Activated B cell treated with CpG ODN at 0.5 μM for 24 hours (primary cell): ENCODE measurements at regions of chr13 and their contacts with region 1.

Region 1: DNA sequence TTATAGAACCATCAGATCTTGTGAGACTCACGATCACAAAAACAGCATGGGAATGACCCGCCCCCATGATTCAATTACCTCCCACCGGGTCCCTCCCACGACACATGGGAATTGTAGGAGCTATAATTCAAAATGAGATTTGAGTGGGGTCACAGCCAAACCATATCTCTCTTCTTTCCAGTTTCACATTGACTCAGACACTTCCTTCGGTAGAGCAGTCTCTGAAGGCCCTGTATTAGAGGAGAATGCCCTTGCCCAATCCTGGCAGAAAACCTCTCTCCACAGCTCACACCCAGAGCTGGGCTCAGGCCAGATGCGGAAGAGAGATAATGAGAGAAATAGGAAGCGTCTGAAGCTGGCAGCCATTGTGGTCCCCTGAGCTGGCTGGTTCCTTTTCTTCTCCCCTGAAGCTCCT is 72.4 kb upstream of the CLDN10 start:
- DNase-seq: no peak
- ATAC-seq: no peak
- H3K4me3 Mint-ChIP-seq: no peak overlapping the region
- H3K27ac Mint-ChIP-seq: no peak overlapping the region
- H3K4me1 Mint-ChIP-seq: peaks cover 5% of the 10 kb centered on the region
- H3K27me3 Mint-ChIP-seq: peaks cover 9% of the 10 kb centered on the region
- CTCF ChIP-seq: no peak

Region 2: GRCh38 chr13:94435604-94436226 is 1044.4 kb before region 1 on chr13:
- CTCF ChIA-PET with region 1: no interaction called
- POLR2A ChIA-PET with region 1: no interaction called
- intact Hi-C with region 1: loop called (anchors 10 kb)
- DNase-seq: no peak
- ATAC-seq: peak; percentile 70
- H3K4me3 Mint-ChIP-seq: no peak overlapping the region
- H3K27ac Mint-ChIP-seq: no peak overlapping the region
- H3K4me1 Mint-ChIP-seq: peaks cover 12% of the 10 kb centered on the region
- H3K27me3 Mint-ChIP-seq: peaks cover 7% of the 10 kb centered on the region
- CTCF ChIP-seq: no peak

Region 3: DNA sequence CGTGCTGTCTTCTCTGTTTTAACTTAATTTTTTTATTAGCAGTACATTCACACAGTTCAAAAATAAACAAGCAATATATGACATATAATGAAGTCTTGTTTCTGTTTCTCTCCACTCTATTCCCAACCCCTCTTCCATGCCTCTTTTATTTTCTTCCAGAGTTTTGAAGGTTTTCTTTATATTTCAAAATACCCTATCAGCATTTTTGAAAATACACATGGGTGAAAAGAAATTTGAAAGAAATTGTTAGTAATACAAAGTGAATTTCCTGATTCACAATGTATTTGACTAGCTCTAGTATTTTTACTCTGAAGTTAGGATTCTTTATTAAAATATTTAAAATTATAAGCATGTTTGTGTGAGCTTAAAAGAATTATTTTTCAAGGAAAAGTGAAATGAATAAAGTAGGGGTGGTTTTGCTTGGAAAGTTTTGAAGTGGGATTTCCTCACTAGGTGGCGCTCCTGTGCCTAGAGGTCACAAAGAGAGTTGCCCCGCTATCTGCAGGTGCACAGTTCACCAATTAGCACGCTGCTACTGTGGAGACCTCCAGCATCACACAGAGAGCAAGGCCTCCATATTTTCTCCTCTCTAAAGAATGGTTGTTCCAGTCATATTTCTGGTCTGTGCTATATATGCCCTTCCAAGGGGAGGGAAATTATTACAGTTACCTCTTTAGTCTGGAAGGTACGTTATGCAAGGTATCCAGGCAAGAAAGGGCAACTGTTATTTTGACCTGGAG is 805.4 kb before region 1 on chr13:
- CTCF ChIA-PET with region 1: no interaction called
- POLR2A ChIA-PET with region 1: no interaction called
- intact Hi-C with region 1: loop called (anchors 1 kb)
- DNase-seq: no peak
- ATAC-seq: no peak
- H3K4me3 Mint-ChIP-seq: no peak overlapping the region
- H3K27ac Mint-ChIP-seq: no peak overlapping the region
- H3K4me1 Mint-ChIP-seq: no peaks in the 10 kb centered on the region
- H3K27me3 Mint-ChIP-seq: peaks cover 16% of the 10 kb centered on the region
- CTCF ChIP-seq: peak; percentile 38

Region 4: GRCh38 chr13:95185851-95186250 is 294.3 kb before region 1 on chr13:
- CTCF ChIA-PET with region 1: interaction called, 16 read pairs
- POLR2A ChIA-PET with region 1: no interaction called
- intact Hi-C with region 1: loop called (anchors 1 kb)
- DNase-seq: no peak
- ATAC-seq: peak; percentile 61
- H3K4me3 Mint-ChIP-seq: peak overlapping the region; percentile 20
- H3K27ac Mint-ChIP-seq: no peak overlapping the region
- H3K4me1 Mint-ChIP-seq: peaks cover 17% of the 10 kb centered on the region
- H3K27me3 Mint-ChIP-seq: no peaks in the 10 kb centered on the region
- CTCF ChIP-seq: no peak

Region 5: DNA sequence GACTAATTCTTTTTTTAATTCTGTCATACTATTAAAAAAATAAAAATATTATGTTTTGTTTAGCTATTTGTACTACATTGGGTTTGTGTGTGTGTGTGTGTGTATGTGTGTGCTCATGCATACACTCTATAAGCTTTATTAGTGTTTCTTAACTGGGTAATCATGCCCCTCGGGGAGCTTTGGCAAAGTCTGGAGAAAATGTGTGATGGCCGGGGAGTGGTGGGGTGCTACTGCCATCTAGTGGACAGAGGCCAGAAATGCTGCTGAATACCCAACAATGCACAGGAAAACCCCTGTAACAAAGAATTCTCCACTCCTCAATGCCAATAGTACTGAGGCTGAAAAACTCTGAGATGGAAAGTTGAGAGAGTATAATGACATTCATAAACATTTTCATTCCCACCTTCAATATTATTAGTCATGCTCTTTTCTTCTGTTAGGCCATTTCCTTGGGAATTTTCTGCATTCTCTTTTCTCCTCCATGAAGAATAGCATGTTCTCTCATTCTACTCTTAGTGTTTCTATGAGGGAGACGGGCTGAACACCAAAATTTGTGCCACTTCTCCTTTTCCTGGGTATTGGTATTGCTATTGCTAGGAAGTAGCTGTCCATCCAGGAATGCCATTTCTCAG is 354.1 kb after region 1 on chr13:
- CTCF ChIA-PET with region 1: interaction called, 3 read pairs
- POLR2A ChIA-PET with region 1: no interaction called
- intact Hi-C with region 1: loop called (anchors 5 kb)
- DNase-seq: peak; percentile 45
- ATAC-seq: peak; percentile 66
- H3K4me3 Mint-ChIP-seq: no peak overlapping the region
- H3K27ac Mint-ChIP-seq: no peak overlapping the region
- H3K4me1 Mint-ChIP-seq: no peaks in the 10 kb centered on the region
- H3K27me3 Mint-ChIP-seq: peaks cover 2% of the 10 kb centered on the region
- CTCF ChIP-seq: peak; percentile 94